Caco-2 (cell line): ENCODE measurements at regions of chr7 and their contacts with region 1.

Region 1: DNA sequence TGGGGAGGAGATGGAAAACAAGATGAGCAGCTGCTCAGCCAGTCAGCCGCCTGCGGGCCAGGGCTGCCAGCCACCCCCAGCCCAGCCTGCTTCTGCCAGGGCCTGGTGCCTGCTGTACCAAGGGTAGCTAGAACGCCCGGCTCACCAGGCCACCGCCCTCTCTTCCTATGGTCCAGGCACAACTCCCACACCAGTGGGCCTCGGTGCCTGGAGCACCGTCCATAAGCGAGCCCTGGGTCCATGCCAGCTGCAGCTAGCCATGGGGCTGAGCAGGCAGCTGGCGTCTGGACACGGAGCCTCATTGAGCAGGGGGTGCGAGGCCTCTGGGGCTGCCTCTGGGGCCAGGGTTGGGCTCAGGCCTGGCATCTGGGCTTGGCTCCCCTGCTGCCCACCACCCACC is 8.5 kb upstream of the RABGEF1 start:
- DNase-seq: no peak
- H3K4me3 ChIP-seq: no peak overlapping the region
- H3K4me3 Mint-ChIP-seq: no peak overlapping the region
- H3K27ac Mint-ChIP-seq: no peak overlapping the region
- H3K4me1 ChIP-seq: no peaks in the 10 kb centered on the region
- H3K4me1 Mint-ChIP-seq: peaks cover 6% of the 10 kb centered on the region
- H3K27me3 ChIP-seq: no peaks in the 10 kb centered on the region
- H3K27me3 Mint-ChIP-seq: no peaks in the 10 kb centered on the region
- CTCF ChIP-seq: no peak

Region 2: GRCh38 chr7:66713638-66714037 is 18.3 kb before region 1 on chr7:
- CTCF ChIA-PET with region 1: no interaction called
- POLR2A ChIA-PET with region 1: no interaction called
- intact Hi-C with region 1: loop called (anchors 1 kb)
- DNase-seq: no peak
- H3K4me3 ChIP-seq: no peak overlapping the region
- H3K4me3 Mint-ChIP-seq: no peak overlapping the region
- H3K27ac Mint-ChIP-seq: no peak overlapping the region
- H3K4me1 ChIP-seq: no peaks in the 10 kb centered on the region
- H3K4me1 Mint-ChIP-seq: no peaks in the 10 kb centered on the region
- H3K27me3 ChIP-seq: no peaks in the 10 kb centered on the region
- H3K27me3 Mint-ChIP-seq: no peaks in the 10 kb centered on the region
- CTCF ChIP-seq: no peak

Region 3: DNA sequence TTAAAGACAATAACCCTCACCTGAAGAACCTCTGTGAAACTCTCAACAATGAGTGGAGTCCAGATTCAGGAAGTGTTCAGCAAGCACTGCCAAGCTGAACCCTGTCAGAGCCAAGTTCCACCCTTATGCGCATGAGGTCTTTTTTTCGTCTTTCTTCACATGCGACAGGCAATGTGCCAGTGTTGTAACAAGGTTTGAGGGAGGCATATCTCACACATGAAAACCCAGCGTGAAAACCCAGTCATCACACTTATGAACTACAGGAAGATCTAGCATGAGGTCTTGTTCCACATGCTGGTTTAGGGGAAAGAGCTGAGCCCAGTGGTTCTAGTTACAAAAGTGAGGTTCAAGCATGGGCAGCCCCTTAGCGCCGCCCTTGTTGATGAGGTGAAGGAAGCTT is 58.2 kb after region 1 on chr7:
- CTCF ChIA-PET with region 1: no interaction called
- POLR2A ChIA-PET with region 1: no interaction called
- intact Hi-C with region 1: no loop called
- DNase-seq: no peak
- H3K4me3 ChIP-seq: no peak overlapping the region
- H3K4me3 Mint-ChIP-seq: no peak overlapping the region
- H3K27ac Mint-ChIP-seq: no peak overlapping the region
- H3K4me1 ChIP-seq: no peaks in the 10 kb centered on the region
- H3K4me1 Mint-ChIP-seq: no peaks in the 10 kb centered on the region
- H3K27me3 ChIP-seq: no peaks in the 10 kb centered on the region
- H3K27me3 Mint-ChIP-seq: no peaks in the 10 kb centered on the region
- CTCF ChIP-seq: no peak

Region 4: DNA sequence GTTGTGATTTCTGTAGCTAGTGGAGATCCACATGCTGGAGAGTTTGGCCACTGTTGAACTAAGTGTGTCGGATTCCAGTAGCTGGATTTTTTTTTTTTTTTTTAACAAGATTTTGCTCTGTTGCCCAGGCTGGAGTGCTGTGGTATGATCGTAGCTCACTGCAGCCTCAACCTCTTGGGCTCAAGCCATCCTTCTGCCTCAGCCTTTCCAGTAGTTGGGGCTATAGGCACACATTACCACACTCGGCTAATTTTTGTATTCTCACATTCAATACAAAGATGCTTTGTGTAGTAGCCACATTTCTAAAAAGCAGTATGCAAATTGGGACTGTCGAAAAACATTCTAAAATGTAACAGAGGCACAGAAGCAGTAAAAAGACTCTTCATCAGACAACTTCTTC is 72.0 kb after region 1 on chr7:
- CTCF ChIA-PET with region 1: no interaction called
- POLR2A ChIA-PET with region 1: no interaction called
- intact Hi-C with region 1: no loop called
- DNase-seq: no peak
- H3K4me3 ChIP-seq: no peak overlapping the region
- H3K4me3 Mint-ChIP-seq: no peak overlapping the region
- H3K27ac Mint-ChIP-seq: no peak overlapping the region
- H3K4me1 ChIP-seq: no peaks in the 10 kb centered on the region
- H3K4me1 Mint-ChIP-seq: no peaks in the 10 kb centered on the region
- H3K27me3 ChIP-seq: no peaks in the 10 kb centered on the region
- H3K27me3 Mint-ChIP-seq: no peaks in the 10 kb centered on the region
- CTCF ChIP-seq: no peak